Activated CD8-positive, alpha-beta T cell treated with anti-CD3 and anti-CD28 coated beads for 36 hours (primary cell): ENCODE measurements at regions of chr17 and their contacts with region 1.

Region 1: GRCh38 chr17:2416010-2416734 is 15.3 kb upstream of the MNT start:
- DNase-seq: peak; percentile 91
- ATAC-seq: peak; percentile 89
- H3K4me3 Mint-ChIP-seq: no peak overlapping the region
- H3K27ac Mint-ChIP-seq: peak overlapping the region; percentile 59
- H3K4me1 Mint-ChIP-seq: peaks cover 3% of the 10 kb centered on the region
- H3K27me3 Mint-ChIP-seq: no peaks in the 10 kb centered on the region
- CTCF ChIP-seq: peak; percentile 99

Region 2: DNA sequence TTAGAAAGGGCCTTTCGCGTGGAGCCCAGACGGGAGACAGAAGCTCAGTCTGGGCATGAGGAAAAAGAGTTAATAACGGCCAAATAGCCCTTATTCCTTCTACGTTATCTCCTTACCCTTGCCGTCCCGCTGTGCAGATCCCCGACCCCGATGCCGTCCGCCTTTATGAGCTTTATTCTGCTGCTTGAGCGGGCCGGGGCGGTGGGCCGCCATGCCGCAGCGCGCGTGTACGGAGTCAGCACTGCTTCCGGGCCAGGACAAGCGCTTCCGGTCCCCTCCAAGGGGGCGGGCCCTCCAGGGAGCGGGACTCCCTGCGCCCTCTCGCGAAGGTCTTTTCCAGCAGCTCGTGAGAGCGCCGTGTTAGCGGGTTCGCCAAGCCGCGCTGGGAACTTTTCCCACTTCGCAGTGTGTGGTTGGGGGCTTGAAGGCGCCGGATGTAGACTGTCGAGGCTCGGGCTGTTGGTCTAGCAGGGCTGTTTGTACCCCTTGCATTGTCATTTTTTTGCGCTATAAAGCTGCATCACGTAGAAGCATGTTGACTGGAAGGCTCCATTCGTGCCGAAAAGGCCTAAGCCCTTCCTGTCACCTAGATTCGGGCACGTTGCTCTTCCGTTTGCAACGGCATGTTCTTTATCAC is 79.8 kb before region 1 on chr17 and contains the start of gene TSR1:
- CTCF ChIA-PET with region 1: interaction called, 10 read pairs
- POLR2A ChIA-PET with region 1: interaction called, 3 read pairs
- intact Hi-C with region 1: no loop called
- DNase-seq: peak; percentile 92
- ATAC-seq: peak; percentile 88
- H3K4me3 Mint-ChIP-seq: no peak within 1 kb of the TSS
- H3K27ac Mint-ChIP-seq: peak within 1 kb of the TSS; percentile 96
- H3K4me1 Mint-ChIP-seq: peaks cover 9% of the 10 kb centered on the region
- H3K27me3 Mint-ChIP-seq: no peaks in the 10 kb centered on the region
- CTCF ChIP-seq: no peak
- total RNA-seq, gene TSR1: 75.8 to 79.4 TPM

Region 3: DNA sequence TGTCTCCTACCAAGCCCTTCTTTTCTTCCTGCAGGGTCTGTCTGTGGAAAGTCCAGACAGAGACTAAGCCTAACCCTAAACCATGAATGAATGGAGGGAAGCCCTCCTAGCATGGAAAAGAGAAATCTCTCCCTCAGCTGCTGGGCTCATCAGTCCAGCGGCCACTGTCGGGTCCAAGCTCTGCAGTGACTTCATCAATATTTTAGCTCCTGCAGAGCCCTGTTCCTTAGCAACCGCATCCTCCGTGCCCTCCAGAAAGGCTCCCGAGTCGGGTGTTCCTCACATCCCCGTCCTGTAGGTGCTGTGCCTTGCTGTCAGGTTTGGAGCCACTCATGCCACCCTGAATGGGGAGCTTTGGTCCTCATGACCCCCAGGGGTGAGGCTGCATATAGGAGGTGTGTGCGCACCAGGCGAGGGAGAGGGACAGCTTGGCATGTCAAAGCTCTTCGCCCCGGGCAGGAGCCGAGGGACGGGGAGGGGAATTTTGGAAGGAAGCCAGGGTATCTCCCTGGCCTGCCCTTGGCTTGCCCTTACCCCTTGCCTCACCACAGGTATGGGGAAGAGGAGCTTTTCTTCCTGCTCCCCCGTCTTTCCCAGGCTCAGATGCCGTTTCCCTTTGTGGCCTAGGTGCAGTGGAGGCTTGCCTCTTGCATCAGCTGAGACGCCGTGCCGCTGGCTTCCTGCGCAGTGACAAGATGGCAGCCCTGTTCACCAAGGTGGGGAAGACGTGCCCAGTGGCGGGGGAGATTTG is 55.0 kb before region 1 on chr17:
- CTCF ChIA-PET with region 1: interaction called, 12 read pairs
- POLR2A ChIA-PET with region 1: interaction called, 3 read pairs
- intact Hi-C with region 1: no loop called
- DNase-seq: no peak
- ATAC-seq: no peak
- H3K4me3 Mint-ChIP-seq: no peak overlapping the region
- H3K27ac Mint-ChIP-seq: no peak overlapping the region
- H3K4me1 Mint-ChIP-seq: no peaks in the 10 kb centered on the region
- H3K27me3 Mint-ChIP-seq: no peaks in the 10 kb centered on the region
- CTCF ChIP-seq: no peak

Region 4: DNA sequence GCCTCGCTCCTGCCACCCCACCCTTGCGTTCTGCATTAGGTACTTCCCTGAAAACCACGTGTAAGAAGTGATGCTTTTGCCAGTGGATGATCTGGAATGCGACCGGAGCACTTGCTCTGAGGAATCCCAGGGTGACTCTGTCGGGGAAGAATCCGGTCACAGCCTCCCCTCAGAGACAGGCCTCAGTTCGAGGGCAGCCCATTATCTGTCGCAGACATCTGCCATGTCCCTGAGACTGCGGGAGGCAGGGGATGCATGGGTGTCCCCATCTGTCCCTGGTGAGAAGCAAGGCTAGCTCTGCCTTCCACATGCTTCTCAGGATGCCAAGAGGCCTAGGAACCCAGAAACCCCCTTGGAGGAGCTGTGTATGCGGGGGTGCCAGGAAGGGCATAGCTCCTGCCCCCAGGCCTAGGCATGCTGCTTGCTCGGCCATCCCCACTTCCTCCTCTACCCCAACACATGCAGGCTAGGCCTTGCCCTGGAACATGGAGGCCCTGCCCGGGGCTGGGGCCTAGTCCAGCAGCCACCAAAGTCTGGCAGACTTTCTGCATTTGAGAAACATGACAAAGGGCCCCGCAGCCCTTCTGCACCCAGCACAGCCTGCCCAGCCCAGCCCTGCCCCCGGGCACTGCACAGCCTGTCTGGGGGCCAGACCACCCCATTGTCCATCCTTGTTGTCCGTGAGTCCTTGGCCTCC is 35.8 kb before region 1 on chr17:
- CTCF ChIA-PET with region 1: interaction called, 463 read pairs
- POLR2A ChIA-PET with region 1: interaction called, 21 read pairs
- intact Hi-C with region 1: loop called (anchors 2 kb)
- DNase-seq: no peak
- ATAC-seq: no peak
- H3K4me3 Mint-ChIP-seq: no peak overlapping the region
- H3K27ac Mint-ChIP-seq: peak overlapping the region; percentile 34
- H3K4me1 Mint-ChIP-seq: no peaks in the 10 kb centered on the region
- H3K27me3 Mint-ChIP-seq: no peaks in the 10 kb centered on the region
- CTCF ChIP-seq: no peak

Region 5: DNA sequence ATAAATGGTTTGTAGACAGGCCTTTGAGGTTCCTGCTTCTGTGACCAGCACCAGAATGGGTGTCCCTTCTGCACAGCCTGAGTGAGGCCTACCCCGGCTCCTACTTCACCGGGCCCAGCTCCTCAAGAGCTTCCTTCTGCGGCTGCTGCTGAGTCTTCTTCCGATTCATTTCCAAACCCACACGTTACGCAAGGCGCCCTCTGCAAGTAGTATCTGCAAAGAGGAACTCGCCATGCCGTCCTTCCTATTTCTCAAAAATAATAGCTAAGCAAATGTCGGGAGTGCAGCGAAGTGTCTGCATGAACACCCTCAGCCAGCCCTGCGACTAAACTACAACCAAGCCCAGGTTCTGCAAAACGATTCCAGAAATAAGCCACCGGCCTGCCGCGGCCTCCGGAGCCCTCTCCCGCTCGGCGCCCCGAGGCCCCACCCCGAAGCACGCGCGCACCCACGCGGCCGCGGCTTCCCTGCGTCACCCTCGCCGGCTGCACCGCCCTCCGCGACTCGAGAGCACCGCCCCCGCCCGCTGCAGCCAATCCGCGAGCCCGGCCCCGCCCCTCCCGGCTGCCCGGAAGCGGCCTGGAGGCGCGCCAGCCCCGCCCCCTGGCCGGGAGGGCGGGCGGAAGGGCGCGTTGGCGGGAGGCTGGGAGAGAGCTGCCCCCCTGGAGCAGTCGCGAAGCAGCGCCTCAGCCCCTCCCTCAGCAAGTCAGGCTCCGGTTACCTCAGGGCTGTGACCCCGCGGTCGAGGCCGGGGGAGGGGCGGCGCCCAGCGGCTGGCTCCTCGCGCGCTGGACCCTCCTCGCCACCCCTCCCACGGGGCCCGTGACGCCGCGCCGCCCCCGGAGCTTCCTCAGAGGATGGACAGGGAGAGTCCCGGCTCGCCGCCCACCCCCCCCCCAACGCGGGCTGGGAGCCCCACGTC is 23.7 kb before region 1 on chr17:
- CTCF ChIA-PET with region 1: interaction called, 463 read pairs
- POLR2A ChIA-PET with region 1: interaction called, 7 read pairs
- intact Hi-C with region 1: no loop called
- DNase-seq: peak; percentile 97
- ATAC-seq: peak; percentile 73
- H3K4me3 Mint-ChIP-seq: peak overlapping the region; percentile 95
- H3K27ac Mint-ChIP-seq: peak overlapping the region; percentile 95
- H3K4me1 Mint-ChIP-seq: peaks cover 54% of the 10 kb centered on the region
- H3K27me3 Mint-ChIP-seq: no peaks in the 10 kb centered on the region
- CTCF ChIP-seq: no peak

Region 6: DNA sequence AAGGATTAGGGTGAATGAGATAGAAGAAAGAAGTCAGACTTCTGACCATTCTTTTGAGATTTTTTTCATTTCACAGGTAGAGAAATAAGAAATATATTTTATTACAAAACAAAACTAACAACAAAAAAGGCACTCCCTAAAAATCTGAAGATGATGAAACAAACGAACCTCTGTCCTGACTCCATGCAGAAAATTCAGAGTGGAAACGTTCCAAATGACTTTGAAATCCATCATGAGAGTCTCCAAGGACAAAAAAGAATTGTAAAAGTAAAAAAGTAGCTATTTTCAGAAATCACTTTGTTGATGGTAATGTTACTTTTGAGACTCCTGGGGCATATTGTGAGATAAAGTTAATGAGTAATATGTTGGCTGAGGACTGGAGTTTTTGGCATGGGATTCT is 11.0 kb after region 1 on chr17:
- CTCF ChIA-PET with region 1: interaction called, 30 read pairs
- POLR2A ChIA-PET with region 1: interaction called, 3 read pairs
- intact Hi-C with region 1: no loop called
- DNase-seq: no peak
- ATAC-seq: no peak
- H3K4me3 Mint-ChIP-seq: no peak overlapping the region
- H3K27ac Mint-ChIP-seq: no peak overlapping the region
- H3K4me1 Mint-ChIP-seq: peaks cover 2% of the 10 kb centered on the region
- H3K27me3 Mint-ChIP-seq: no peaks in the 10 kb centered on the region
- CTCF ChIP-seq: no peak

Region 7: DNA sequence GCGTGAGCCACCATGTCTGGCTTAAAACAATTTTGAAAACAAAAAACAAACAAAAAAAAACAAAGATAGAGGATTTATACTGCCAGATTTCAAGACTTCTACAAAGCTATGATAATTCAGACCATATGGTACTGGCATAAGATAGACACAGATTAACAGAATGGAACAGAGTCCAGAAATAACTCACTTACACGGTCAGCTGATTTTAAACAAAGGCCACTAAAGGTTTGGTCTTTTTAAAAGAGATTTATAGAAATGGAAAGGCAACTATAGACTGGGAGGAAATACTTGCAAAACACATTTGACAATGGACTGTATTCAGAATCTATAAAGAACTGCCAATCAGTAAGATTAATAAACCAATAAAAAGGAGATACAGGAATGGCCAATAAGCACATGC is 33.3 kb after region 1 on chr17:
- CTCF ChIA-PET with region 1: interaction called, 12 read pairs
- POLR2A ChIA-PET with region 1: no interaction called
- intact Hi-C with region 1: no loop called
- DNase-seq: no peak
- ATAC-seq: no peak
- H3K4me3 Mint-ChIP-seq: no peak overlapping the region
- H3K27ac Mint-ChIP-seq: no peak overlapping the region
- H3K4me1 Mint-ChIP-seq: peaks cover 11% of the 10 kb centered on the region
- H3K27me3 Mint-ChIP-seq: no peaks in the 10 kb centered on the region
- CTCF ChIP-seq: no peak

Region 8: DNA sequence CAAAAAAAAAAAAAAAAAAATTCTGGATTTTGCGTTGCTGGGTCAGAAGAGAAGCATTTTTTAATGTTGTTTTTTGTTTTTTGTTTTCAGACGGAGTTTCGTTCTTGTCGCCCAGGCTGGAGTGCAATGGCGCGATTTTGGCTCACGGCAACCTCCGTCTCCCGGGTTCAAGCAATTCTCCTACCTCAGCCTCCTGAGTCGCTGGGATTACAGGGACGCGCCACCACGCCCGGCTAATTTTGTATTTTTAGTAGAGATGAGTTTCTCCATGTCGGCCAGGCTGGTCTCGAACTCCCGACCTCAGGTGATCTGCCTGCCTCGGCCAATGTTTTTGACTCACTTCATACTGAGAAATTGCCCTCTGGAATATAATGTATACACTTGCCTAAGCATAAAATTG is 166.3 kb after region 1 on chr17:
- CTCF ChIA-PET with region 1: no interaction called
- POLR2A ChIA-PET with region 1: no interaction called
- intact Hi-C with region 1: no loop called
- DNase-seq: no peak
- ATAC-seq: no peak
- H3K4me3 Mint-ChIP-seq: no peak overlapping the region
- H3K27ac Mint-ChIP-seq: no peak overlapping the region
- H3K4me1 Mint-ChIP-seq: no peaks in the 10 kb centered on the region
- H3K27me3 Mint-ChIP-seq: peaks cover 3% of the 10 kb centered on the region
- CTCF ChIP-seq: no peak